ENCODE measurements at regions of chr6 and their contacts with region 1.

Region 1: DNA sequence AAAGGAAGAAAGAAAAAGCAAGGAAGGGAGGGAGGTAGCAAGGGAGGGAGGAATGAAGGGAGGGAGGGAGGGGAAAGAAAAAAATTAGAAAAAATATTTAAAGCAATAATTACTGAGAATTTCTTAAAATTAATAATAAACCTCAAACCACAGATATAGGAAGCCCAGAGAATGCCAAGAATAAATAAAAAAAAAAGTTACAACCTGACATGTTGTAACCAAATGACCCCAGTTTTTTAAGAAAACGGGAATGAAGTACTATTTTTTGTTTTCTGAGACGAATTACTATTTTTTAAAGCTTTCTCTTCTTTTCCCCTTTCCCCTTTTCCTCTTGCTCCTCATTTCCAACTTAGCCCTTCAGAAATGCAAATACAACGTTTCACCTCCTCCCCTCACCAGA is 16.7 kb downstream of the SLC17A1 start:
- DNase-seq: no peak
- H3K4me3 ChIP-seq: no peak overlapping the region
- H3K27ac ChIP-seq: no peak overlapping the region
- H3K4me1 ChIP-seq: no peaks in the 10 kb centered on the region
- H3K27me3 ChIP-seq: peaks cover 4% of the 10 kb centered on the region
- CTCF ChIP-seq: no peak

Region 2: GRCh38 chr6:25250878-25251277 is 564.3 kb before region 1 on chr6:
- CTCF ChIA-PET with region 1: interaction called, 10 read pairs
- POLR2A ChIA-PET with region 1: no interaction called
- intact Hi-C with region 1: no loop called
- DNase-seq: no peak
- H3K4me3 ChIP-seq: no peak overlapping the region
- H3K27ac ChIP-seq: no peak overlapping the region
- H3K4me1 ChIP-seq: no peaks in the 10 kb centered on the region
- H3K27me3 ChIP-seq: no peaks in the 10 kb centered on the region
- CTCF ChIP-seq: no peak